Activated CD8-positive, alpha-beta T cell treated with anti-CD3 and anti-CD28 coated beads, Interleukin-2, amount 10 ng/mL, durations not matched to agents 7 days and 5 days (primary cell): ENCODE measurements at regions of chr20 and their contacts with region 1.

Region 1: DNA sequence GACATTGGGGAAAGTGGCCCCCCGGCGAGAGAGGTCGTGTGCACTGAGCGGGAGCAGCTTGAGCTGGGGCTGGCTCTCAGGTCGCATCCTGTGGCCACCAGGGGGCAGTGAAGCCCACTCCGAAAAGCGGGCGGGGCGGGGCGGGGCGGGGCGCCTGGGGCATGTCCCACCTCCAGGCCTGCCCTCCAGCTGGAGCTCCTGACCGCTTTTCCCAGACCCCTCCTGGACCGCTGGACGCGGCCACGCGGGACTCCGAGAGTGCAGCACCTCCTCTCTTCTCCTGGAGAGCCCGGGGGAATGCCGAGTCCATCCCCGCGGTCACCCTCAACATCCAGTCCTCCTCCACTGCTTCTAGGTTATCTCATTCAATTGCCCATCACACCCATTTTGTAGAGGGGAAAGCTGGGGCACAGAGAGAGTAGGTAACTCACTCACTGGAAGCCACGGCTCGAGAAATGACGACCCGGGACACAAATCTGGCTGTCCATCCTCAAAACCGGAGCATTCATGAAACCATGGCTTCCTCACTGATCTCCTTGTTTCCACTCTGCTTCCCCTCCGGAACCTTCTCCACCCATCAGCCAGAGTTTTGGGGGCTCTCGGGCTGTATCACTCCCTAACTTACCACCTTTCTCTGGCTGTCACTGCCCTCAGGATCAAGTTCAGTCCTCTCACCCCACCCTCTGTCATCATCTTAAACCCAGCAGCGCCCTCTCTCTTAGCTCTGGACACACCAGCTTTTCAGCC is 24.1 kb downstream of the COX4I2 start:
- DNase-seq: peak; percentile 83
- ATAC-seq: peak; percentile 85
- H3K4me3 Mint-ChIP-seq: peak overlapping the region; percentile 75
- H3K27ac Mint-ChIP-seq: peak overlapping the region; percentile 90
- H3K4me1 Mint-ChIP-seq: peaks cover 59% of the 10 kb centered on the region
- H3K27me3 Mint-ChIP-seq: no peaks in the 10 kb centered on the region

Region 2: DNA sequence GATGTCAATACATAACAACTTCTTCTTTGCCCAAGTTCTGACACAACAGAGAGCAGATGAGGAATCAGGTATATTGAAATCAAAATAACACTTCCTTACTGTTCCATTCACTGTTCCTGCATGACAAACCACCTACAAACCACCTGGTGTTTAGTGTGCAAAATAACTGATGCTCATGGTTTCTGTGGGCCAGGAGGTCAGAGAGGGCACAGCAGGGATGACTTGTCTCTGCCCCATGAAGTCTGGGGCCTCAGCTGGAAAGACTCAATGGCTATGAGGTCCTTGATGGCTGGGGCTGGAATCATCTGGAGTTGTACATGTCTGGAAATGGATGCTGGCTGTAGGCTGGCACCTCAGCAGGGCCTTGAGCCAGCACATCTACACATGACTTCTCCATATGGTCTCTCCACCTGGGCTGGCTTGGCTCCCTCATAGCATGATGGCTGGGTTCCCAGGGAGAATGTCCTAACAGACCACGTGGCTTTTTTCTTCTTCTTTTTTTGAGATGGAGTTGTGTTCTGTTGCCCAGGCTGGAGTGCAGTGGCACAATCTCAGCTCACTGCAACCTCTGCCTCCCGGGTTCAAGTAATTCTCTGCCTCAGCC is 31.5 kb before region 1 on chr20:
- CTCF ChIA-PET with region 1: interaction called, 34 read pairs
- POLR2A ChIA-PET with region 1: no interaction called
- DNase-seq: no peak
- ATAC-seq: no peak
- H3K4me3 Mint-ChIP-seq: no peak overlapping the region
- H3K27ac Mint-ChIP-seq: no peak overlapping the region
- H3K4me1 Mint-ChIP-seq: peaks cover 8% of the 10 kb centered on the region
- H3K27me3 Mint-ChIP-seq: peaks cover 4% of the 10 kb centered on the region

Region 3: GRCh38 chr20:31674895-31675827 is 13.4 kb after region 1 on chr20:
- CTCF ChIA-PET with region 1: interaction called, 95 read pairs
- POLR2A ChIA-PET with region 1: interaction called, 53 read pairs
- DNase-seq: peak; percentile 84
- ATAC-seq: peak; percentile 63
- H3K4me3 Mint-ChIP-seq: peak overlapping the region; percentile 89
- H3K27ac Mint-ChIP-seq: peak overlapping the region; percentile 98
- H3K4me1 Mint-ChIP-seq: peaks cover 95% of the 10 kb centered on the region
- H3K27me3 Mint-ChIP-seq: no peaks in the 10 kb centered on the region

Region 4: DNA sequence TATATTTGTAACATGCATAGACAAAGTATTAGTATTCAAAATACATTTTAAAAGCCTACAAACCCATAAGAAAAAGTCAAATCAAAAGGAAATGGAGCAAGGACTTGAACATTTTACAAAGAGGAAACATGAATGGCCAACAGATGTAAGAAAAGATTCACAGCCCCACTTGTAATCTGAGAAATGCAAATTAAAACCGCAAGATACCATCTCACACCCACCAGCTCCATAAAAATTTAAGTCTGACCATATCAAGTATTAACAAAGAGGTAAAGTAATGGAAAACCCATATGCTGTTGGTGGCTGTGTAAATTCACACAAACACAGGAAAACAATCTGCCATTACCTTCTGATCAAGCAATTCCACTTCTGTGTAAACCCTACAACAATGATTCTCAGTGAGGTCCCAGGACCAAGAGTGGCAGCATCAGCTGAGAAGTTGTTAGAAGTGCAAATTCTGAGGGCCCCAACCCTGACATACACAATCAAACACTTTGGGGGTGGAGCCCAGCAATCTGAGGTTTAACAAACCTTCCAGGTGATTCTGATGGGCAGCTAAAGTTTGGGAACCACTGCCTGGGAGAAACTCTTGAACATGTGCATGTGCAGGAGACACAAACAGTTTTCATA is 30.0 kb after region 1 on chr20:
- CTCF ChIA-PET with region 1: interaction called, 80 read pairs
- POLR2A ChIA-PET with region 1: no interaction called
- DNase-seq: no peak
- ATAC-seq: peak; percentile 39
- H3K4me3 Mint-ChIP-seq: no peak overlapping the region
- H3K27ac Mint-ChIP-seq: peak overlapping the region; percentile 62
- H3K4me1 Mint-ChIP-seq: peaks cover 63% of the 10 kb centered on the region
- H3K27me3 Mint-ChIP-seq: no peaks in the 10 kb centered on the region

Region 5: GRCh38 chr20:31704225-31705119 is 42.7 kb after region 1 on chr20:
- CTCF ChIA-PET with region 1: interaction called, 43 read pairs
- POLR2A ChIA-PET with region 1: interaction called, 3 read pairs
- DNase-seq: no peak
- ATAC-seq: no peak
- H3K4me3 Mint-ChIP-seq: no peak overlapping the region
- H3K27ac Mint-ChIP-seq: no peak overlapping the region
- H3K4me1 Mint-ChIP-seq: peaks cover 61% of the 10 kb centered on the region
- H3K27me3 Mint-ChIP-seq: no peaks in the 10 kb centered on the region

Region 6: DNA sequence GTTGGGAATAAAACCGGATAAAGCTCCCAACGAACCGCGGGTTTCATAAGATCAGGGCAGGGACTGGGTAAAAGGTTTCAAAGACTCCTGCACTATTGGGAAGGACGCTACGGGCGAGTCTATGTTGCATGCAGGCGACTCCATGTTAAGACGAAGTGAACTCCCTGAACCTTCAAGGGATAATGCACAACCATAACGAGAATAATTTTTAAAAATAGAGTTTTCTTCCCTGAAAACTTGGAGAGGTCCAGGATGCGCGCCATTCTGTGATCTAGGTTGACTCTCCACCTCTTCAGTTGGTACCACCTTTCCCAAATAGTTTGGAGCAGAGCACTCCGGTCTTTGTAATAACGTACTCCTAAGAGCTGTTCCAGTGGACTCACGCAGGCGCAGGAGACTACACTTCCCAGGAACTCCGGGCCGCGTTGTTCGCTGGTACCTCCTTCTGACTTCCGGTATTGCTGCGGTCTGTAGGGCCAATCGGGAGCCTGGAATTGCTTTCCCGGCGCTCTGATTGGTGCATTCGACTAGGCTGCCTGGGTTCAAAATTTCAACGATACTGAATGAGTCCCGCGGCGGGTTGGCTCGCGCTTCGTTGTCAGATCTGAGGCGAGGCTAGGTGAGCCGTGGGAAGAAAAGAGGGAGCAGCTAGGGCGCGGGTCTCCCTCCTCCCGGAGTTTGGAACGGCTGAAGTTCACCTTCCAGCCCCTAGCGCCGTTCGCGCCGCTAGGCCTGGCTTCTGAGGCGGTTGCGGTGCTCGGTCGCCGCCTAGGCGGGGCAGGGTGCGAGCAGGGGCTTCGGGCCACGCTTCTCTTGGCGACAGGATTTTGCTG is 77.1 kb after region 1 on chr20 and contains the start of gene TPX2:
- CTCF ChIA-PET with region 1: interaction called, 24 read pairs
- POLR2A ChIA-PET with region 1: interaction called, 5 read pairs
- DNase-seq: peak; percentile 87
- ATAC-seq: peak; percentile 94
- H3K4me3 Mint-ChIP-seq: no peak within 1 kb of the TSS
- H3K27ac Mint-ChIP-seq: no peak within 1 kb of the TSS
- H3K4me1 Mint-ChIP-seq: peaks cover 3% of the 10 kb centered on the region
- H3K27me3 Mint-ChIP-seq: no peaks in the 10 kb centered on the region
- total RNA-seq, gene TPX2: 172 to 174 TPM